MCF 10A (cell line): ENCODE measurements at regions of chr17 and their contacts with region 1.

Region 1: DNA sequence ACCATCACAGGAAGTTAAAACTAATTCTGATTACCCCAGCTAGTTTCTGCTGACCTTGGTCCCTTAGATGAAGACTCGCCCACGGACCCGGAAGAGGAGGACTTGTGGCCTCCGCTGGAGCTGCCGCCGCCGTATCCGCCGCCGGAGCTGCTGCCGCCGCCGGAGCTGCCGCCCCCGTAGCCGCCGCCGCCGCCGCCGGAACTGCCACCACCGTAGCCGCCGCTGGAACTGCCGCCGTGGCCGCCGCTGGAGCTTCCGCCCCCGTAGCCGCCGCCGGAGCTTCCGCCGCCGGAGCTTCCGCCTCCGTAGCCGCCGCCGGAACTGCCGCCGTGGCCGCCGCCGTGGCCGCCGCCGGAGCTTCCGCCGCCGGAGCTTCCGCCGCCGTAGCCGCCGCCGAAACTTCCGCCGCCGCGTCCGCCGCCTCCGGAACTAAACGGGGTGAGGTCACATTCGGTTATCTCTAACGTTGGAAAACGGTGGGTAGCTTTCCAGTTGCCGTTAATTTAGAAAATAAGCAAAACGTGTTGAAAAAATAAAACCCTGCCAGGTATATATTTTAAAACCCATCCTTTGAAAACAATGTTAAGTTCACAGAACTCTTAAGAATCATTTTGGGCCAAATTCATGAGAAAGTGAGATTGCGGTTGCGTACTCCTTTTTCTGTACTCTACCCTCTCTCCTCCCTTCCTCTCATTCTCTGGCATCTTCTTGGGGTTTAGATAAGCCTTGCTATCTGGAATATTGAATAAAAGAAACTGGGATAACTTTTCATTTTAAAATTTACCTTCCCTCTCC is 3.5 kb downstream of the KRT10 start:
- DNase-seq: peak; percentile 69
- H3K4me3 Mint-ChIP-seq: peak overlapping the region; percentile 83
- H3K27ac Mint-ChIP-seq: peak overlapping the region; percentile 95
- H3K4me1 Mint-ChIP-seq: peaks cover 28% of the 10 kb centered on the region
- H3K27me3 Mint-ChIP-seq: no peaks in the 10 kb centered on the region
- CTCF ChIP-seq: no peak

Region 2: GRCh38 chr17:40841246-40841645 is 22.3 kb after region 1 on chr17:
- CTCF ChIA-PET with region 1: no interaction called
- POLR2A ChIA-PET with region 1: interaction called, 352 read pairs
- intact Hi-C with region 1: no loop called
- DNase-seq: no peak
- H3K4me3 Mint-ChIP-seq: no peak overlapping the region
- H3K27ac Mint-ChIP-seq: peak overlapping the region; percentile 12
- H3K4me1 Mint-ChIP-seq: peaks cover 4% of the 10 kb centered on the region
- H3K27me3 Mint-ChIP-seq: no peaks in the 10 kb centered on the region
- CTCF ChIP-seq: no peak

Region 3: GRCh38 chr17:41655611-41656351 is 836.9 kb after region 1 on chr17:
- CTCF ChIA-PET with region 1: no interaction called
- POLR2A ChIA-PET with region 1: interaction called, 15 read pairs
- intact Hi-C with region 1: no loop called
- DNase-seq: peak; percentile 98
- H3K4me3 Mint-ChIP-seq: peak overlapping the region; percentile 69
- H3K27ac Mint-ChIP-seq: no peak overlapping the region
- H3K4me1 Mint-ChIP-seq: peaks cover 68% of the 10 kb centered on the region
- H3K27me3 Mint-ChIP-seq: no peaks in the 10 kb centered on the region
- CTCF ChIP-seq: no peak